GM12878 (cell line): ENCODE measurements at regions of chr2 and their contacts with region 1.

Region 1: GRCh38 chr2:197310271-197310985 is at the start of gene ANKRD44:
- DNase-seq: no peak
- ATAC-seq: peak; percentile 73
- H3K4me3 ChIP-seq: peak within 1 kb of the TSS; percentile 98
- H3K27ac ChIP-seq: peak within 1 kb of the TSS; percentile 99
- H3K4me1 ChIP-seq: peaks cover 21% of the 10 kb centered on the region
- H3K27me3 ChIP-seq: no peaks in the 10 kb centered on the region
- CTCF ChIP-seq: peak; percentile 17 to 64 (median 23); a peak in 3 of 6 replicates
- EP300 ChIP-seq: 0 out of 4 replicates have a peak, but pooled peaks of 1 of the 2 experiments have one; percentile 21
- POLR2A ChIP-seq: peak; percentile 80
- RAD21 ChIP-seq: peak; percentile 55
- polyA plus RNA-seq, gene ANKRD44: 19.1 to 29.1 TPM

Region 2: GRCh38 chr2:197145471-197146138 is 164.8 kb before region 1 on chr2:
- CTCF ChIA-PET with region 1: interaction called, 4 read pairs
- POLR2A ChIA-PET with region 1: interaction called, 5 read pairs
- RAD21 ChIA-PET with region 1: interaction called, 15 read pairs
- SMC1A ChIA-PET with region 1: interaction called, 4 read pairs
- in situ Hi-C with region 1: no loop called
- intact Hi-C with region 1: no loop called
- DNase-seq: peak; percentile 89
- ATAC-seq: peak; percentile 95
- H3K4me3 ChIP-seq: no peak overlapping the region
- H3K27ac ChIP-seq: peak overlapping the region; percentile 32
- H3K4me1 ChIP-seq: peaks cover 42% of the 10 kb centered on the region
- H3K27me3 ChIP-seq: no peaks in the 10 kb centered on the region
- CTCF ChIP-seq: no peak
- EP300 ChIP-seq: peak; percentile 31 to 69; a peak in 1 of 4 replicates
- POLR2A ChIP-seq: peak; percentile 51; the same call in 1 of the 2 replicates
- RAD21 ChIP-seq: 0 out of 2 replicates have a peak, but pooled peaks have one; percentile 1

Region 3: DNA sequence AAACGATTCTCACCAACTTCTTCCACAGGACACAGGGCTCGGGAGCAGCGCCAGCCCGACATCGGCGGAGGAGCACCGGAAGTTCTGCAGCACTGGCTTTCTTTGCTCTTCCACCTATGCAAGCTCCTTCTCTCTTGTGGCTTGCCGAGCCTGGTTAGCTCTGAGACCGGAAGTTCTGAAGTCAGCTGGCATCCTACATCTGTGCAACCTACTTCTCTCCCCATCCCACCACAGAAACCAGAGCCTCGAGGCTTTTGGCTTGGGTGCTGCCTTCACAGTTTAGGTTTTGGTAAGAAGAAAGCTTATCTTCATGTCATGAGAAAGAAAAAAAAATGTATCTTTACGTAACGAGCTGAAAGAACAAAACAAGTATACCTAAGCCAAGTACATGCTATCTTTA is 111.5 kb before region 1 on chr2:
- CTCF ChIA-PET with region 1: interaction called, 119 read pairs
- POLR2A ChIA-PET with region 1: interaction called, 43 read pairs
- RAD21 ChIA-PET with region 1: interaction called, 408 read pairs
- SMC1A ChIA-PET with region 1: interaction called, 433 read pairs
- in situ Hi-C with region 1: loop called (anchors 5 kb)
- intact Hi-C with region 1: loop called (anchors 2 kb)
- DNase-seq: peak; percentile 98
- ATAC-seq: peak; percentile 98
- H3K4me3 ChIP-seq: peak overlapping the region; percentile 53; the same call in 1 of the 2 replicates
- H3K27ac ChIP-seq: peak overlapping the region; percentile 87
- H3K4me1 ChIP-seq: peaks cover 36% of the 10 kb centered on the region
- H3K27me3 ChIP-seq: no peaks in the 10 kb centered on the region
- CTCF ChIP-seq: no peak
- EP300 ChIP-seq: peak; percentile 71 to 84
- POLR2A ChIP-seq: peak; percentile 87
- RAD21 ChIP-seq: no peak; the same call in 1 of the 2 replicates

Region 4: DNA sequence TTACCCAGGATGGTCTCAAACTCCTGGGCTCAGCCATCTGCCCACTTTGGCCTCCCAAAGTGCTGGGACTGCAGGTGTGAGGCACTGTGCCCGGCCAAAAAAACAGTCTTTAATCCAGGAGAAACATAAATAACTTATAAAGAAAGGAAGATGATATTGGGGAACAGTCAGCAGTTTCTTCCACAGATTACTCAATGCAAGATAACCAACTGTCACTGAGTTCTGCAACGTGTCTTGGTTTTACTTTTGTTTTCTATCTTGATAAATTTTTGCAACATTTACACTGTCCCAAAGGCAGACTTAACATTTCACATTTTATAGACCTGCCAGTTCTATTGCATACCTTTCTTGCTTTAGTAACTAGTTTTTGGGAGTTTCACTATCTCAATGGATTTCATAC is 71.0 kb before region 1 on chr2:
- CTCF ChIA-PET with region 1: interaction called, 6 read pairs
- POLR2A ChIA-PET with region 1: interaction called, 19 read pairs
- RAD21 ChIA-PET with region 1: interaction called, 25 read pairs
- SMC1A ChIA-PET with region 1: interaction called, 28 read pairs
- in situ Hi-C with region 1: no loop called
- intact Hi-C with region 1: no loop called
- DNase-seq: no peak
- ATAC-seq: peak; percentile 82
- H3K4me3 ChIP-seq: peak overlapping the region; percentile 56
- H3K27ac ChIP-seq: peak overlapping the region; percentile 77
- H3K4me1 ChIP-seq: peaks cover 49% of the 10 kb centered on the region
- H3K27me3 ChIP-seq: no peaks in the 10 kb centered on the region
- CTCF ChIP-seq: no peak
- EP300 ChIP-seq: no peak
- POLR2A ChIP-seq: no peak
- RAD21 ChIP-seq: no peak

Region 5: GRCh38 chr2:197261808-197262226 is 48.6 kb before region 1 on chr2:
- CTCF ChIA-PET with region 1: interaction called, 68 read pairs
- POLR2A ChIA-PET with region 1: interaction called, 85 read pairs
- RAD21 ChIA-PET with region 1: interaction called, 178 read pairs
- SMC1A ChIA-PET with region 1: interaction called, 165 read pairs
- in situ Hi-C with region 1: no loop called
- intact Hi-C with region 1: no loop called
- DNase-seq: peak; percentile 91
- ATAC-seq: peak; percentile 67
- H3K4me3 ChIP-seq: peak overlapping the region; percentile 12; the same call in 1 of the 2 replicates
- H3K27ac ChIP-seq: peak overlapping the region; percentile 87
- H3K4me1 ChIP-seq: peaks cover 63% of the 10 kb centered on the region
- H3K27me3 ChIP-seq: no peaks in the 10 kb centered on the region
- CTCF ChIP-seq: no peak
- EP300 ChIP-seq: peak in 1 of 2 experiments; percentile 77; a peak in 3 of 4 replicates
- POLR2A ChIP-seq: peak; percentile 38
- RAD21 ChIP-seq: no peak

Region 6: GRCh38 chr2:197293252-197294007 is 17.0 kb before region 1 on chr2:
- CTCF ChIA-PET with region 1: interaction called, 94 read pairs
- POLR2A ChIA-PET with region 1: interaction called, 139 read pairs
- RAD21 ChIA-PET with region 1: interaction called, 180 read pairs
- SMC1A ChIA-PET with region 1: interaction called, 159 read pairs
- in situ Hi-C with region 1: no loop called
- intact Hi-C with region 1: no loop called
- DNase-seq: no peak
- ATAC-seq: peak; percentile 69
- H3K4me3 ChIP-seq: peak overlapping the region; percentile 43
- H3K27ac ChIP-seq: peak overlapping the region; percentile 95
- H3K4me1 ChIP-seq: peaks cover 54% of the 10 kb centered on the region
- H3K27me3 ChIP-seq: no peaks in the 10 kb centered on the region
- CTCF ChIP-seq: no peak
- EP300 ChIP-seq: peak in 1 of 2 experiments; percentile 18; a peak in 2 of 4 replicates
- POLR2A ChIP-seq: no peak
- RAD21 ChIP-seq: no peak